A549 (cell line): ENCODE measurements at regions of chr13 and their contacts with region 1.

Region 1: GRCh38 chr13:52450012-52450792 is at the start of gene VPS36:
- DNase-seq: peak; percentile 59 to 91
- ATAC-seq: peak; percentile 85 to 89
- H3K4me3 ChIP-seq: peak within 1 kb of the TSS; percentile 83
- H3K27ac ChIP-seq: peak within 1 kb of the TSS; percentile 98 to 99
- H3K4me1 ChIP-seq: peaks cover 28% of the 10 kb centered on the region; the same call in 2 of the 3 replicates
- CTCF ChIP-seq: peak; percentile 93
- EP300 ChIP-seq: no peak
- POLR2A ChIP-seq: peak; percentile 63
- RAD21 ChIP-seq: peak; percentile 81 to 94
- polyA plus RNA-seq, gene VPS36: 23.1 and 26.7 TPM in 2 replicates

Region 2: GRCh38 chr13:51935326-51936201 is 514.6 kb before region 1 on chr13:
- CTCF ChIA-PET with region 1: no interaction called
- POLR2A ChIA-PET with region 1: no interaction called
- DNase-seq: peak; percentile 29 to 35
- ATAC-seq: peak; percentile 77 to 95
- H3K4me3 ChIP-seq: no peak overlapping the region
- H3K27ac ChIP-seq: no peak overlapping the region
- H3K4me1 ChIP-seq: no peaks in the 10 kb centered on the region
- CTCF ChIP-seq: peak; percentile 17; the same call in 1 of the 3 replicates
- EP300 ChIP-seq: no peak
- POLR2A ChIP-seq: no peak
- RAD21 ChIP-seq: peak in 1 of 2 experiments; percentile 31; a peak in 2 of 5 replicates

Region 3: GRCh38 chr13:52348983-52349780 is 101.0 kb before region 1 on chr13:
- CTCF ChIA-PET with region 1: interaction called, 115 read pairs
- POLR2A ChIA-PET with region 1: interaction called, 18 read pairs
- DNase-seq: peak; percentile 6 to 56
- ATAC-seq: peak; percentile 50 to 51; a peak in 3 of 6 replicates
- H3K4me3 ChIP-seq: no peak overlapping the region
- H3K27ac ChIP-seq: peak overlapping the region in 1 of 2 experiments; percentile 57; a peak in 2 of 6 replicates
- H3K4me1 ChIP-seq: peaks cover 12% of the 10 kb centered on the region; the same call in 2 of the 3 replicates
- CTCF ChIP-seq: no peak
- EP300 ChIP-seq: no peak
- POLR2A ChIP-seq: no peak
- RAD21 ChIP-seq: no peak

Region 4: DNA sequence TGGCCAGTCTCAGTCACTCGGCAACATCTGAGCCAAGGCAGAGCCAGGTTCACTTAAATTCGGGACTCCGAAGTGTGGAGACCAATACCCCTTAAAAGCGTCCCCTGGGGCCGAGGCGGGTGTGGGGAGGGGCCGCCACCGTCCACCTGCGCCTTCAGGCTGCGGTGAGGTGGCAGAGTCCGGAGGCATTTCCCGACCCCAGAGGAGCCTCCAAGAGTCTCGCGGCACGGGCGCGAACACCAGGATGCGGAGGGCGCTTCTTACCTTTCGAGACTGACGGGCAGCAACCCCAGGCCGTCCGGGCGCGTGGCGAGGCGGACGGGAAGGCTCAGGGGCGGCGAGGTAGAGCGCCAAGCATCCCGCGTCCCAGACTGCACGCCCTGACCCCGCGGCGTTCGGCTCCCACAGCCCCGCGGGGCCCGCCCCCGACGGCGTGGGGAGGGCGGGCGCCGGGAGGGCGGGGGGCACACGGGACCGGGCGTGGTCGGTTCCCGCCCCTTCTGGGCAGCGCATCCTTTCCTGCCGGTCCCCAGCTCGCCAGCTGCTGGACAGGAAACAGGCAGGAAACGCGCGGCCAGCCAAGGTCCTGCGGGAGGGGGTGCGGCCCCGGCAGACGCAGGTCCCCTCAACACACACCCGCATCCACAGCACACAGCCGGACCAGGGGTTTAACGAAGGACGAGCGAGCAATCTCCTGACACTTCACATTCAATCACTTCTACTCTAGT is 44.3 kb before region 1 on chr13 and contains the start of gene THSD1:
- CTCF ChIA-PET with region 1: interaction called, 30 read pairs
- POLR2A ChIA-PET with region 1: interaction called, 7 read pairs
- DNase-seq: peak; percentile 40 to 54
- ATAC-seq: peak; percentile 91 to 93
- H3K4me3 ChIP-seq: peak within 1 kb of the TSS; percentile 81
- H3K27ac ChIP-seq: peak within 1 kb of the TSS; percentile 75 to 88
- H3K4me1 ChIP-seq: peaks cover 22% of the 10 kb centered on the region
- CTCF ChIP-seq: no peak
- EP300 ChIP-seq: no peak
- POLR2A ChIP-seq: peak; percentile 44
- RAD21 ChIP-seq: no peak
- polyA plus RNA-seq, gene THSD1: 5.4 and 5.9 TPM in 2 replicates

Region 5: GRCh38 chr13:52421216-52421615 is 29.0 kb before region 1 on chr13:
- CTCF ChIA-PET with region 1: interaction called, 25 read pairs
- POLR2A ChIA-PET with region 1: no interaction called
- DNase-seq: no peak
- ATAC-seq: no peak
- H3K4me3 ChIP-seq: no peak overlapping the region
- H3K27ac ChIP-seq: no peak overlapping the region
- H3K4me1 ChIP-seq: peaks cover under 1% of the 10 kb centered on the region; the same call in 1 of the 3 replicates
- CTCF ChIP-seq: no peak
- EP300 ChIP-seq: no peak
- POLR2A ChIP-seq: no peak
- RAD21 ChIP-seq: no peak